CD8-positive, alpha-beta T cell (primary cell): ENCODE measurements at regions of chr9 and their contacts with region 1.

Region 1: DNA sequence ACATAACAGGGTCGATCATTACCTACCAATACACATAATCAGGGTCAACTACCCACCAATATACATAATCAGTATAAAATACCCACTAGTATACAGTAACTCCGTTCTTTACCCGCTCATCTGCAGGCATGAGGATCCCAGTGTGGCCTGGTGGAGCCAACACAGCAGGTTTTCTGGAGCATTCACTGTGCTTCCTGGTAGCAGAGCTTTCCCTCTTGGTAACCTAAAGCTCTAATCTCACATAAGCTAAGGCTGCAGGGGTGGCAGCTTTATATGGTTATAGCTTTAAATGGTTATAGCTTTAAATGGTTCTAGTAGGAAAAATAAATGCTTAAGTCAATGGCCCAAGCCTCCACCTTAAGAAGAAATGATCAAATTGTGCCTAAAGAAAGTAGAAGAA is 11.9 kb downstream of the LCN1 start:
- DNase-seq: no peak
- ATAC-seq: no peak
- H3K4me3 ChIP-seq: no peak overlapping the region
- H3K4me3 Mint-ChIP-seq: no peak overlapping the region
- H3K27ac ChIP-seq: no peak overlapping the region
- H3K27ac Mint-ChIP-seq: no peak overlapping the region
- H3K4me1 ChIP-seq: no peaks in the 10 kb centered on the region
- H3K4me1 Mint-ChIP-seq: no peaks in the 10 kb centered on the region
- H3K27me3 ChIP-seq: no peaks in the 10 kb centered on the region
- H3K27me3 Mint-ChIP-seq: peaks cover 29% of the 10 kb centered on the region
- CTCF ChIP-seq: no peak

Region 2: DNA sequence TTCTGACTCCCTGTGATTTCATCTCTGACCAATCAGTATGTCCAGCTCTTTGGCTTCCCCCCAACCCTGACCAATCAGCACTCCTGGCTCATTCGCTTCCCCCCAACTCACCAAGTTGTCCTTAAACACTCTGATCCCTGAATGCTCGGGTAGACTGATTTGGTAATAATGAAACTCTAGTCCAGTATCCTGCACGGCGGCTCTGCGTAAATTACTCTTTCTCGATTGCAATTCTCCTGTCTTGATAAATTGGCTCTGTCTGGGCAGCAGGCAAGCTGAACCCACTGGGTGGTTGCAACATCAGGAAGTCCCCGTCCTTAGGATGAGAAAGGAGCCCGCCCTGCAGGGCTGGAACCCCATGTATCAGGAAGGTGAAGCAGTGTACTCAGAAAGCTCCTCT is 642.1 kb before region 1 on chr9:
- CTCF ChIA-PET with region 1: no interaction called
- POLR2A ChIA-PET with region 1: no interaction called
- intact Hi-C with region 1: no loop called
- DNase-seq: peak in 1 of 9 experiments; percentile 23
- ATAC-seq: no peak
- H3K4me3 ChIP-seq: no peak overlapping the region
- H3K4me3 Mint-ChIP-seq: no peak overlapping the region
- H3K27ac ChIP-seq: no peak overlapping the region
- H3K27ac Mint-ChIP-seq: no peak overlapping the region
- H3K4me1 ChIP-seq: no peaks in the 10 kb centered on the region
- H3K4me1 Mint-ChIP-seq: no peaks in the 10 kb centered on the region
- H3K27me3 ChIP-seq: no peaks in the 10 kb centered on the region
- H3K27me3 Mint-ChIP-seq: peaks cover 21% of the 10 kb centered on the region
- CTCF ChIP-seq: no peak

Region 3: DNA sequence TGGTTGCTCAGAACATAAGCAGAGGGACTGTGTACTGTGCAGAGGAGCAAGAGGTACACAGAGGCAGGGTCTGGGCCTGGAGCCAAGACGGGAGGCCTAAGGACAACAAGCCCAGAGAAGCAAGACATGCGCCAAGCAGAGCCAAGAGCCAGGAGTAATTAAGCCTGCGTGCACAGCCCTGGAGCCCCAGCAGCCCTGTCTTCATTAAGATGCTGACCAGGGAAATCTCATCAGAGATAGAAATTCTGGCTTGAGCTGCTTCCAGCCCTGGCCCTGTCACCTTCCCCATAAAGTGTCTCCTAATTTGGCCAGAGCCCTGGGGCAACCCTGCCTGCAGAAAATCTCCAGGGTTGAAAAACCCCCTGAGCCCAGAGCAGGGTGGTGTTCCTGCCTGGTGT is 137.8 kb before region 1 on chr9:
- CTCF ChIA-PET with region 1: no interaction called
- POLR2A ChIA-PET with region 1: no interaction called
- intact Hi-C with region 1: loop called in 1 of 2 experiments (anchors 5 kb)
- DNase-seq: no peak
- ATAC-seq: no peak
- H3K4me3 ChIP-seq: no peak overlapping the region
- H3K4me3 Mint-ChIP-seq: no peak overlapping the region
- H3K27ac ChIP-seq: no peak overlapping the region
- H3K27ac Mint-ChIP-seq: no peak overlapping the region
- H3K4me1 ChIP-seq: no peaks in the 10 kb centered on the region
- H3K4me1 Mint-ChIP-seq: no peaks in the 10 kb centered on the region
- H3K27me3 ChIP-seq: no peaks in the 10 kb centered on the region
- H3K27me3 Mint-ChIP-seq: no peaks in the 10 kb centered on the region
- CTCF ChIP-seq: no peak

Region 4: DNA sequence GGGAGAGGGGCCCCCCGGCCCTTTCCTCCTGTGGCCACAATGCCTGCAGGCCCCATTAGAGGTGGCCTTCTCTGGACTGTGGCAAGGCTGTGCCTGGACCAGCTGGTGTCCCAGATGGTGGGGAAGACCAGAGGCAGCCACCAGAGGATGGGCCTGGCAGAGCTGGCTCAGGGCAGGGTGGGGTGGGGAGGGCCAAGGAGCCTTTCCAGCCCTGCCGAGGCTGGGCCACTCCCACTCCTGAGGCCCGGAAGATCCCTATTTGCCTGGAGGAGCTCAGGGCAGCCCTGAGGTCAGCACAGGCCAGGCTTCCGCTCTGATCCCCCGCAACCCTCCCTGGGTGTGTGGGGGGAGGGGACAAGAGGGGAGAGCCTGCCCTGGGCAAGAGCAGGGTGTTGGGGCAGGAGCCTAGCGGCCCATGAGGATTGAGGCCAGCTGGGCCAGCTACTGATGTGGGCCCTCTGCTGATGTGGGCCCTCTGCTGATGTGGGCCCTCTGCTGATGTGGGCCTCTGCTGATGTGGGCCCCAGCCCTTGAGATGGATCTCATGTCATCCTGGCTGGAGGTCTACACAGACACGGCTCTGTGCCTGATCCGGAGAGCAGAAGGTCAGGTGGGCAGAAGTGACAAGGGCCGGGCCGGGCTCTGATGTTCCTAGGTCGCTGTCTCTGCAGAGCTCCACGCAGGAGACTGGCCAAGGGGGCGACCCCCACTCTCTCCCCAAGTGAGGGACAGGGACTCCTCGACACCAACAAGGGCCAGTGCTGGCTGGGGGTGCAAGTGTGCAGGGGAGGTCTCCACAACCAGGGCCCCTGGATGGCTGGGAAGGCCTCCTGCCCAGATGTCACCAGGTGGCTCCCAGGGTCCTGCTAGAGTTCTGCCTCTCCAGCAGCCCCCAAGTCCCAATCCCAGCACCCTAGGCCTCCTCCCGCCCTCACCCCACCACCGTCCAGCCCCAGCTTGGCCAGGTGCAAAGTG is 26.5 kb before region 1 on chr9:
- CTCF ChIA-PET with region 1: no interaction called
- POLR2A ChIA-PET with region 1: no interaction called
- intact Hi-C with region 1: no loop called
- DNase-seq: no peak
- ATAC-seq: no peak
- H3K4me3 ChIP-seq: no peak overlapping the region
- H3K4me3 Mint-ChIP-seq: no peak overlapping the region
- H3K27ac ChIP-seq: no peak overlapping the region
- H3K27ac Mint-ChIP-seq: no peak overlapping the region
- H3K4me1 ChIP-seq: peaks cover 12% of the 10 kb centered on the region
- H3K4me1 Mint-ChIP-seq: peaks cover 19% of the 10 kb centered on the region
- H3K27me3 ChIP-seq: no peaks in the 10 kb centered on the region
- H3K27me3 Mint-ChIP-seq: no peaks in the 10 kb centered on the region
- CTCF ChIP-seq: no peak